ENCODE measurements at regions of chr4 and their contacts with region 1.

Region 1: DNA sequence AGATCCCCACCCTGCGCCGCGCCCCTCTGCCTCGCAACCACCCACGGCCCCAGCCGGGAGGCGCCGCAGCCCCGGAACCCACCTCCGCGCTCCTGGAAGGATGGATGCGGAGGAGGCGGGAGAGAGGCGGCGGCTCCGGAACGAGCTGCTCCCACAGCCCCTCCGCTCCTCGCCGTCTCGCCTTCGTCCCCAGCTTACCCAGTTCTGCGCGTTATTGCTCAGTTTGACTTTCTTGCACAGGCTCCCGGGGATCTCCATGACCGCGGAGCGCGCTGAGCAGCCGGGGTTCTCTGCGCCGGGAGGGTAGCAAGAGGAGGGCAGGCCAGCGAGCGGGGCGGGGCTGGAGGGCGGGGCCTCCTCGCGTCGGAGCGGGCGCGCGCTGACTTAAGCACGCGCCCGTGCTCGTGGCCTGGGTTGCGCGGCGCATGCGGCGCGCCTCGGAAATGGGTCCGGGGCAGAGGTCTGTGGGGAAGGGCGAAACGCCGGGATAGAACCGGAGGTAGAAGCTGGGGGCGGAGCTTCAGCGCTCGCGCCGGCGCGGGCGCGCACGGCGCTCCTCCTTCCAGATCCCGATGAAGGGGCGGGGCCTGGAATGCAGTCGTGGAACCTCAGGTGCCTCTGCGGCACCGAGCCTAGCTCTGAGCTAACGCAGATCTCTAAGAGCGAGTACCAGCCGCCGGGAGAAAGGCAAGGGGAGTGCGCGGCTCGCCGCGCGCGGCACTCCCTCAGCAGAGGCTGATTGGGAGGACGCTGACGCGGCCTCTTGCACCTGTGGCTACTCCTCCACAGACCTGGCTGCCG is at the start of gene PAPSS1:
- DNase-seq: peak; percentile 93
- ATAC-seq: peak; percentile 92
- H3K4me3 ChIP-seq: peak within 1 kb of the TSS; percentile 94 to 98 (median 98)
- H3K27ac ChIP-seq: peak within 1 kb of the TSS; percentile 78
- H3K4me1 ChIP-seq: peaks cover 46% of the 10 kb centered on the region
- H3K27me3 ChIP-seq: no peaks in the 10 kb centered on the region; a peak in 1 of 5 replicates
- CTCF ChIP-seq: no peak
- EP300 ChIP-seq: no peak
- POLR2A ChIP-seq: peak; percentile 62 to 80
- RAD21 ChIP-seq: no peak; the same call in none of the 2 replicates
- total RNA-seq, gene PAPSS1: 126 and 170 TPM in 2 replicates

Region 2: DNA sequence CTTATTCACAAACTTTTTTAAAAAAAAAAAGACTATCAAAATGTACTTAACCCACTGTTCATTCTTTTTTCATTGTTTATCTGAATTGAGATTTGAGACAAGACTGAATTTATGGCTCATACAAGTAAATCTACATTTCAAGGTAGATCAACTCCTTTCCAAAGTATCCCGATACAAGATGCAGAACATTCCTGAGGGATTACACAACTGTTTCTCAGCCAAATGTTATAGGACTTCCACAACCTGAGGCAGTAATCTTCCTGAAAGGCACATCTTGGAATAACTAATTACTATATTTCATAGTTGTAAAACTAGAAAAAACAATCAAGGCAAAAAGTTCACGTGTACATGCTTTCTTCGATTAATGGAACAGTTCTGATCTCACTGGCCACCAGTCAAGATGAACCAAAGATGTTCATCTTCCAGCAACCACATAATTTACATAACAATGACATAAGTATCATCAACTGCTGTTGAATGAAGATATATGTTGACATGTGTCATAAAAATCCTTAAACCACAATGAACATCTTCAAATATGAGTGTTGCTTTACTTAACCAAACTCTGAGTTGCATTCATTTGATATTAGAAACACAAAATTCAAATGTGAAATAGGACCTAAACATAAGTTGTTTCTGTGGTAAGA is 458.8 kb before region 1 on chr4:
- CTCF ChIA-PET with region 1: no interaction called
- POLR2A ChIA-PET with region 1: no interaction called
- in situ Hi-C with region 1: no loop called
- intact Hi-C with region 1: no loop called
- DNase-seq: no peak
- ATAC-seq: no peak
- H3K4me3 ChIP-seq: no peak overlapping the region
- H3K27ac ChIP-seq: no peak overlapping the region
- H3K4me1 ChIP-seq: no peaks in the 10 kb centered on the region
- H3K27me3 ChIP-seq: no peaks in the 10 kb centered on the region
- CTCF ChIP-seq: no peak
- EP300 ChIP-seq: no peak
- POLR2A ChIP-seq: no peak
- RAD21 ChIP-seq: no peak

Region 3: DNA sequence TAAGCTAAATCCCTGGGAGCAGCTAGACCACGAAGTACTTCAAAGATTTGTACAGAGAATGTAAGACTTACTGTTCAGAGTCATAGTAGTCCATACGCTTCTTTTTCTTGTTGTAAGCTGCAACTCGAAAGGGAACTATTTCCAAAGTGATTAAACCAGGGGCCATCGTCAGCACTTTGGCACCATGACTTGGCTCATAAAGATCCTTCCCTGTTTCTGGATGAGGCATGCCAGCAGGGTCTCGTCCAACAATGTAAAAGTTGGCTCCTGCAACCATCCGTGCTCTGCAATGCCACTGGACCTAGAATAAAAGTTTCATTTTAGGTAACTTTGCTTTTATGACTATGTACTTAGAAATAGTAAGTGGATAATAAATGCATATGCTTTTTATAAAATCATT is 88.6 kb before region 1 on chr4:
- CTCF ChIA-PET with region 1: no interaction called
- POLR2A ChIA-PET with region 1: no interaction called
- in situ Hi-C with region 1: no loop called
- intact Hi-C with region 1: loop called (anchors 5 kb)
- DNase-seq: no peak
- ATAC-seq: no peak
- H3K4me3 ChIP-seq: no peak overlapping the region
- H3K27ac ChIP-seq: no peak overlapping the region
- H3K4me1 ChIP-seq: peaks cover 58% of the 10 kb centered on the region
- H3K27me3 ChIP-seq: no peaks in the 10 kb centered on the region
- CTCF ChIP-seq: no peak
- EP300 ChIP-seq: no peak
- POLR2A ChIP-seq: no peak
- RAD21 ChIP-seq: no peak

Region 4: DNA sequence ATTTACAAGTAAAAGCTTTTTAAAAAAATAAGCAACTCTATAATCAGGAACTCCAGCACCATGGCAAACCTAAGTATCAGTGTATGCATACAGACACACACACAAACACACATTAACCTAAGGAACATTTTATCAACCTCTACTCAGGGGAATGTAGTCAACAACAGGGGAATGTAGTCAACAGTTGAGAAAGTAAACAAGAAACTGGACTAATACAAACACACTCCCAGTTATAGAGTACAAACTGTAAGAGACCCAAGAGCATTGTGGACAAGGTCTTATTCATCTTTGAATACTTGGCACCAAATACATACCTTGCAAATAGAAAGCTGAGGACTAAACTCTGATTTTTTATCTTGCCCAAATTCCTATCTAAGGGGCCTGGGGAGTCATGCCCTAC is 36.2 kb before region 1 on chr4:
- CTCF ChIA-PET with region 1: no interaction called
- POLR2A ChIA-PET with region 1: interaction called, 3 read pairs
- in situ Hi-C with region 1: no loop called
- intact Hi-C with region 1: loop called (anchors 2 kb)
- DNase-seq: peak; percentile 77
- ATAC-seq: peak; percentile 98
- H3K4me3 ChIP-seq: no peak overlapping the region
- H3K27ac ChIP-seq: peak overlapping the region; percentile 12
- H3K4me1 ChIP-seq: peaks cover 29% of the 10 kb centered on the region
- H3K27me3 ChIP-seq: no peaks in the 10 kb centered on the region
- CTCF ChIP-seq: no peak
- EP300 ChIP-seq: peak in 1 of 2 experiments; percentile 72; a peak in 2 of 4 replicates
- POLR2A ChIP-seq: no peak
- RAD21 ChIP-seq: no peak

Region 5: DNA sequence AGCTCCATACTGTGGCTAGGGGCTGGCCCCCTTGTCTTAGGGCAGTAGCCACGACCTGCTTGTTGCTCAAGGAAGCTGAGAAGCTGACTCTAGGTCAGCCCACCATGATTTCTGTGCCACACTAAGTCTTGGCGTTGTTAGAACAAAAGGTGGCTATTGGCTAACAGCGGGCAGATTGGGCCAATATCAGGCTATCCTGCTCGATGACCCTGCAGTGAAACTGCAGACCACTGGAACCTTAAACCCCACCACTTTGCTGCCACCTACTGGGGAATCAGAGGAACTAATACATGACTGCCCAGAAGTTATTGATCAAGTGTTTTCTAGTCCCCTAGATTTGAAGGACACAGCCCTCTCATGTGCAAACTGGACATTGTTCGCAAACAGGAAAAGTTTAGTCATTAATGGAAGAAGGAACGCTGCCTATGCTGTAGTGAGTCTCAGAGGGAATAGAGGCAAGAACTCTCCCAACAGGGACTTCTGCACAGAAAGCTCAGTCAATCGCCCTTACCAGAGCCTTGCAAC is 16.9 kb after region 1 on chr4:
- CTCF ChIA-PET with region 1: no interaction called
- POLR2A ChIA-PET with region 1: interaction called, 23 read pairs
- in situ Hi-C with region 1: no loop called
- intact Hi-C with region 1: loop called (anchors 2 kb)
- DNase-seq: peak; percentile 69
- ATAC-seq: peak; percentile 90
- H3K4me3 ChIP-seq: peak overlapping the region in 1 of 3 experiments; percentile 31; a peak in 1 of 6 replicates
- H3K27ac ChIP-seq: peak overlapping the region; percentile 66
- H3K4me1 ChIP-seq: peaks cover 41% of the 10 kb centered on the region
- H3K27me3 ChIP-seq: no peaks in the 10 kb centered on the region; a peak in 1 of 5 replicates
- CTCF ChIP-seq: peak; percentile 94
- EP300 ChIP-seq: peak in 1 of 2 experiments; percentile 59; a peak in 1 of 4 replicates
- POLR2A ChIP-seq: no peak
- RAD21 ChIP-seq: peak; percentile 86

Region 6: GRCh38 chr4:107751670-107752069 is 31.5 kb after region 1 on chr4:
- CTCF ChIA-PET with region 1: no interaction called
- POLR2A ChIA-PET with region 1: interaction called, 5 read pairs
- in situ Hi-C with region 1: no loop called
- intact Hi-C with region 1: loop called (anchors 1 kb)
- DNase-seq: peak; percentile 48
- ATAC-seq: peak; percentile 54
- H3K4me3 ChIP-seq: no peak overlapping the region
- H3K27ac ChIP-seq: no peak overlapping the region
- H3K4me1 ChIP-seq: peaks cover 34% of the 10 kb centered on the region
- H3K27me3 ChIP-seq: 0 out of 5 replicates have a peak, but pooled peaks cover 0 to 1% of the 10 kb centered on the region in 2 experiments
- CTCF ChIP-seq: no peak
- EP300 ChIP-seq: peak in 1 of 2 experiments; percentile 51; a peak in 2 of 4 replicates
- POLR2A ChIP-seq: no peak
- RAD21 ChIP-seq: no peak

Measured in HepG2 (cell line).